ENCODE measurements at regions of chr3 and their contacts with region 1.

Region 1: DNA sequence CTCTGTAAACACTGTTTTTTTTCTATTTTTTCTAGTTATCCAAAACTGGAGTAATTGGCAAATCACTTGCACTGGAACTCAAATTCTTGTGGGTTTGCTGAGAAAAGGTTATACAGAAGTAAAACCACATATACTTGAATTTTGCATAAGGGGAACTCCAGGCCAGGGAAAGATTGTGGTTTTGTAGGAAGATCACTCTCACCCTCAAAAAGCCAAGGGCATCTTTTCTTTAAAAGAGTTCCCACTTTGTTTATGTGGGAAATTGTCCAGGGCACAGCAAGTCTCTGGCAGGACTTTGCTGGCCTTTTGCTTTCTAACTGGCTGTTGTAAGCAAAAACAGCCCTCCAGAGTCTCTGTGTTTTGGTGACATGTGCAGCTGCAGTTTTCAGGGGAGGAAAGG is 340.3 kb upstream of the RBMS3 start:
- DNase-seq: peak; percentile 25
- H3K4me3 ChIP-seq: no peak overlapping the region
- H3K27ac ChIP-seq: peak overlapping the region; percentile 39 to 54
- H3K4me1 ChIP-seq: no peaks in the 10 kb centered on the region
- H3K27me3 ChIP-seq: no peaks in the 10 kb centered on the region
- CTCF ChIP-seq: no peak
- POLR2A ChIP-seq: no peak

Region 2: DNA sequence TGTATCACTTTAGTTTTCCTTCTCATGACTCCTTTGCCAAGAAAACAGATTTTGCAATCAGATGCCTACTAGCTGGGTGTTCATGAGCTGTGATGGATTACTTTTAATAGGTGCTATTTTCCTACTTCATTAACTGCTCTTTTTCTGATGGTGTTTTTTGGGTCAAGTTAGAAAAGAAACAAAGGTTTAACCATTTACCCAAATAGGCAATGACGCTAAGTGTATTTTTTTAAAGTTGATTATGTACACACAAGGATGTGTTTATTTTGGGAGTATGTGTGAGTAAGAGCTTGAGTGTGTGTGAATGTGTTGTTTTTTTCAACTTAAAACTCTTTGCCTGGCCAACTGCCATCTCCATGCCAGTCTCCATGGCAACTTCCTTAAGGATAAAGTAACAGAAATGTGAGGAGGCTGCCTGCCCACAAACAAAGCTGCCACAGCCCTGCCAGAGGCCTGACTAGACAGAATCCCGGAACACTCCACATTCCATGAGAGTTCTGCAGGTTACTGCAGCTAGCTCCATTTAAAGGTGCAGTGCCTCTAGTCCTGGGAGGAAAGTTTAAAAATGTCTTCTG is 124.8 kb after region 1 on chr3:
- intact Hi-C with region 1: loop called (anchors 10 kb)
- DNase-seq: peak; percentile 87
- H3K4me3 ChIP-seq: no peak overlapping the region
- H3K27ac ChIP-seq: peak overlapping the region in 1 of 2 donors; percentile 19
- H3K4me1 ChIP-seq: no peaks in the 10 kb centered on the region
- H3K27me3 ChIP-seq: no peaks in the 10 kb centered on the region
- CTCF ChIP-seq: no peak
- POLR2A ChIP-seq: no peak

Measured in prostate gland (tissue), 2 donors.